ENCODE measurements at regions of chr16 and their contacts with region 1.

Region 1: GRCh38 chr16:1929578-1930337 is 11.5 kb upstream of the HS3ST6 start:
- DNase-seq: no peak
- ATAC-seq: peak; percentile 89
- H3K4me3 ChIP-seq: peak overlapping the region; percentile 43 to 62
- H3K27ac ChIP-seq: peak overlapping the region; percentile 39; the same call in 1 of the 2 replicates
- H3K4me1 ChIP-seq: peaks cover 8% of the 10 kb centered on the region
- H3K27me3 ChIP-seq: no peaks in the 10 kb centered on the region
- CTCF ChIP-seq: peak; percentile 99

Region 2: DNA sequence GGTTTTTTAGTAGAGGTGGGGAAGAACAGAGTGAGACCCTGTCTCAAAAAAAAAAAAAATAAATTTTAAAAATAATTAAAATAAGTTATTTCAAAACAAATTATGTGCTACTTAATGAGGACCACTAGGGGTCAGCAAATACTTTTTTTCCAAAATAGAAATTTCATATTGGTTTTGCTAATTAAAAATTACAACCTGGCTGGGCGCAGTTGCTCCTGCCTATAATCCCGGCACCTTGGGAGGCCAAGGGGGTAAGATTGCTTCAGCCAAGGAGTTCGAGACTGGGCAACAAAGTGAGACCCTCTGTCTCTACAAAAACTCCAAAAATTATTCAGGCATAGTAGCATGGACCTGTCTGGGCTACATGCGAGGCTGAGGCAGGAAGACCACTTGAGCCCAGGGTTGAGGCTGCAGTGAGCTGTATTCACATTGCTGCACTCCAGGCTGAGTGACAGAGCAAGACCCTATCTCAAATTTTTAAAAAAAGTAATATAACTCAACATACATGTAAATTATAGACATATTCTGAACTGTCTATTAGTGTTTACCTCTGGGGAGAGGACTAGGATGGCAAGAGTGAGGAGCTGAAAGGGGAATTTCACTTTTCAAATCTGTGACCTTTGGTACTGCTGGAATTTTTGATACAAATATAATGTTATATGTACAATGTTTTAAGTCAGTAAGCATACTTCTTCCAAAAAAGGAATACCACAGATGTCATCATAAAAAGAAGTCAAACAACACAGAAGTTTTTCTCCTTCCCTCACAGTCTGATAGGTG is 65.9 kb before region 1 on chr16:
- CTCF ChIA-PET with region 1: interaction called, 6 read pairs
- POLR2A ChIA-PET with region 1: no interaction called
- in situ Hi-C with region 1: no loop called
- intact Hi-C with region 1: loop called (anchors 5 kb)
- DNase-seq: no peak
- ATAC-seq: peak; percentile 68; the same call in 1 of the 2 replicates
- H3K4me3 ChIP-seq: no peak overlapping the region
- H3K27ac ChIP-seq: no peak overlapping the region
- H3K4me1 ChIP-seq: peaks cover 3% of the 10 kb centered on the region; the same call in 1 of the 2 replicates
- H3K27me3 ChIP-seq: no peaks in the 10 kb centered on the region; the same call in 1 of the 2 replicates
- CTCF ChIP-seq: peak; percentile 80

Region 3: GRCh38 chr16:2003827-2004641 is 74.3 kb after region 1 on chr16:
- CTCF ChIA-PET with region 1: no interaction called
- POLR2A ChIA-PET with region 1: no interaction called
- in situ Hi-C with region 1: no loop called
- intact Hi-C with region 1: no loop called
- DNase-seq: no peak
- ATAC-seq: peak; percentile 89
- H3K4me3 ChIP-seq: no peak overlapping the region
- H3K27ac ChIP-seq: peak overlapping the region; percentile 65
- H3K4me1 ChIP-seq: peaks cover 43% of the 10 kb centered on the region
- H3K27me3 ChIP-seq: no peaks in the 10 kb centered on the region
- CTCF ChIP-seq: peak; percentile 99

Region 4: DNA sequence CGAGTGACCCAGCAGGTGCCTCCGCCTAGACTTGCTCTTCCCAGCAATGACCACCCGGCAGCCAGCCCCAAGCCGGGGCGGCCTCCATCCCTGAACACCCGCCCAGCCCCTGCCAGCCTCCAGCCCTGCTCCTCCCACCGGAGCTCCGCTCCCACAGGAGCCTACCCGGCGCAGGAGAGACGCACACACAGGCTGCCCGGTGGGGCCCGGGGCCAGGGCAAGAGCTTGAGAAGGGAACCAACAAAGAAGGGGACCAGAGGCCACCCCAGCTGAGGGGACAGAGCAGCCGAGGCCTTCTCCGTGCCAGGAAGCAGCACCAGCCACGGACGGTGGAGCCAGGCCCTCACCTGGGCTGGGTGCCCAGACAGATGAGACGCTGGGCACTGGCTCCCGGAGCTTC is 192.1 kb after region 1 on chr16:
- CTCF ChIA-PET with region 1: no interaction called
- POLR2A ChIA-PET with region 1: no interaction called
- in situ Hi-C with region 1: no loop called
- intact Hi-C with region 1: no loop called
- DNase-seq: no peak
- ATAC-seq: peak; percentile 62
- H3K4me3 ChIP-seq: peak overlapping the region; percentile 17 to 50
- H3K27ac ChIP-seq: peak overlapping the region; percentile 72
- H3K4me1 ChIP-seq: peaks cover 42% of the 10 kb centered on the region
- H3K27me3 ChIP-seq: no peaks in the 10 kb centered on the region
- CTCF ChIP-seq: no peak

Measured in Panc1 (cell line).